H1 (cell line): ENCODE measurements at regions of chr2 and their contacts with region 1.

Region 1: GRCh38 chr2:88055371-88056128 is at the start of gene KRCC1:
- DNase-seq: peak; percentile 93
- H3K4me3 ChIP-seq: peak within 1 kb of the TSS; percentile 88 to 99 (median 93)
- H3K27ac ChIP-seq: peak within 1 kb of the TSS; percentile 84
- H3K4me1 ChIP-seq: peaks cover 0 to 9% (median 4%) of the 10 kb centered on the region in 4 experiments; a peak in 5 of 7 replicates
- H3K27me3 ChIP-seq: no peaks in the 10 kb centered on the region
- CTCF ChIP-seq: no peak
- EP300 ChIP-seq: no peak
- POLR2A ChIP-seq: peak; percentile 79 to 86
- RAD21 ChIP-seq: no peak
- total RNA-seq, gene KRCC1: 7.7 and 8.5 TPM in 2 replicates

Region 2: GRCh38 chr2:88016086-88016959 is 39.2 kb before region 1 on chr2 and contains the start of gene RNU2-63P:
- CTCF ChIA-PET with region 1: interaction called, 8 read pairs
- POLR2A ChIA-PET with region 1: interaction called, 26 read pairs
- DNase-seq: peak; percentile 65 to 91
- H3K4me3 ChIP-seq: peak within 1 kb of the TSS; percentile 65 to 81 (median 72)
- H3K27ac ChIP-seq: peak within 1 kb of the TSS; percentile 97
- H3K4me1 ChIP-seq: peaks cover 9 to 18% (median 13%) of the 10 kb centered on the region in 4 experiments
- H3K27me3 ChIP-seq: no peaks in the 10 kb centered on the region
- CTCF ChIP-seq: no peak
- EP300 ChIP-seq: no peak; a peak in 1 of 3 replicates
- POLR2A ChIP-seq: peak; percentile 97 to 100
- RAD21 ChIP-seq: no peak
- total RNA-seq, gene RNU2-63P: 6.6 and 8.3 TPM in 2 replicates

Region 3: DNA sequence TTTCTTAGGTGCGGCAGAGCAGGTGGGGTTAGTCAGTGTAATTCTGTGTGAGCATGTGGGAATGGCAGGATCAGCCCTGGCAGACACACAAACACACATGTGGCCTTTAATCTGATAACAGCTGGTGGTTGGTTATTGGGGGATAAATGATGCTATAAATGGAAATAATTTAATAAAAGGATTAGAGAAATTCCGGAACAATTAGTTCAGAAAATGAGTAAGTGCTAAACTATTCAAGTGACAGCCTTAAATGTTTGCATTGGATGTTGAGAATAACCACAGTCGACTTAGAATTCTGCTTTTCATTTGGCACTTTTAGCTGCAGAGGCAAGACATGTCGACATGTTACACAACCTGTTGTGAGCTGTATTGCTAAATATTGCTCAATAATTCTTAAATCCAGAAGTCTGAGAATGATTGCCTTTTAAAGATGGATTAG is 19.3 kb after region 1 on chr2:
- CTCF ChIA-PET with region 1: interaction called, 50 read pairs
- POLR2A ChIA-PET with region 1: interaction called, 4 read pairs
- DNase-seq: no peak
- H3K4me3 ChIP-seq: no peak overlapping the region
- H3K27ac ChIP-seq: no peak overlapping the region
- H3K4me1 ChIP-seq: 0 out of 7 replicates have a peak, but pooled peaks cover 0 to 2% (median 0%) of the 10 kb centered on the region in 4 experiments
- H3K27me3 ChIP-seq: no peaks in the 10 kb centered on the region
- CTCF ChIP-seq: no peak
- EP300 ChIP-seq: no peak
- POLR2A ChIP-seq: no peak
- RAD21 ChIP-seq: no peak

Region 4: DNA sequence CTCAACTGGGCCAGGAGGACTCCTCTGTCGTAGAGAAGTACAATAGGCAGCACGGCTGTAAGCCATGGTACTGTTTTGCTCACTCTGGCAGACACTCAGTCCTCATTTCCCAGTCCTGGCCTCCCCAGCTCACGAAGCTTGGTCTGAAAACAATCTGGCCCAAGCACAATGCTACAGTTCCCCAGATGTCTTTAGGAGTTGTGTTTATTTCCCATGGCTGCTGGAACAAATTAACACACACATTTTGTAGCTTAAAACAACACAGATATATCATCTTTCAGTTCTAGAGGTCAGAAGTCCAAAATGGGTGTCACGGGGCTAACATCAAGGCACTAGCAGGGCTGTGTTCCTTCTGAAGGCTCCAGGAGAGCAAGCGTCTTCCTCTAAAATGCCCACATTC is 59.3 kb after region 1 on chr2:
- CTCF ChIA-PET with region 1: interaction called, 20 read pairs
- POLR2A ChIA-PET with region 1: no interaction called
- DNase-seq: no peak
- H3K4me3 ChIP-seq: no peak overlapping the region
- H3K27ac ChIP-seq: no peak overlapping the region
- H3K4me1 ChIP-seq: no peaks in the 10 kb centered on the region; a peak in 1 of 7 replicates
- H3K27me3 ChIP-seq: no peaks in the 10 kb centered on the region
- CTCF ChIP-seq: no peak
- EP300 ChIP-seq: no peak
- POLR2A ChIP-seq: no peak
- RAD21 ChIP-seq: no peak

Region 5: DNA sequence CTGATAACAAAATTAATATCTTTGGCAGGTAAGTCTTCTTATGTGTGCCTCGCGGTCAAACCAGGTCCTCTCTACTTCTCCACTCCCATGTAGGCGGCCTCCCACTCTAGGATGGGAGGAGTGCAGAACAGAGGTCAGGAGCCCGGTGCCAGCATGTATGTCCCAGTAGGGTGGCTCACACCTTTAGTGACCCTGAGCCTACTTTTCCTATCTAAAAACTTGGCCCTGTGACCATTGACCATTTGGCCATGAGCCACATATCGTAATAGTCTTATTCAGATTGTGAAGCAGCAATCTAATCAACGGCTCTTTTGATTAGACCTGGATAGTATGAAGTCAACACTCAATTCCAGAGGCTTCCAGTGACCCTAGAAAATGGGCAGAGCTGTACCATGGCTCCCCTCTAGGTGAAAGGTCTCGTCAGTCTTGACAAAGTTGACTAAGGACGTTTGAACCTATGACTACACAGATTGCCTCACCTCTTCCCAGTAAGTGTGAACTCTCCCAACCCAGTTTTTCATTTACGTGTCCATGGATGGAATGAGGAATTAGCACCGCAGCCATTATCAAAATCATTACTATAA is 89.5 kb after region 1 on chr2:
- CTCF ChIA-PET with region 1: interaction called, 17 read pairs
- POLR2A ChIA-PET with region 1: no interaction called
- DNase-seq: no peak
- H3K4me3 ChIP-seq: no peak overlapping the region
- H3K27ac ChIP-seq: no peak overlapping the region
- H3K4me1 ChIP-seq: no peaks in the 10 kb centered on the region
- H3K27me3 ChIP-seq: no peaks in the 10 kb centered on the region
- CTCF ChIP-seq: no peak
- EP300 ChIP-seq: no peak
- POLR2A ChIP-seq: no peak
- RAD21 ChIP-seq: no peak

Region 6: GRCh38 chr2:88180606-88181240 is 125.2 kb after region 1 on chr2:
- CTCF ChIA-PET with region 1: interaction called, 46 read pairs
- POLR2A ChIA-PET with region 1: interaction called, 6 read pairs
- DNase-seq: peak in 1 of 2 experiments; percentile 29
- H3K4me3 ChIP-seq: no peak overlapping the region
- H3K27ac ChIP-seq: no peak overlapping the region
- H3K4me1 ChIP-seq: peaks cover 0 to 4% (median 0%) of the 10 kb centered on the region in 4 experiments; a peak in 1 of 7 replicates
- H3K27me3 ChIP-seq: 0 out of 7 replicates have a peak, but pooled peaks cover 0 to 4% (median 0%) of the 10 kb centered on the region in 4 experiments
- CTCF ChIP-seq: no peak
- EP300 ChIP-seq: no peak
- POLR2A ChIP-seq: no peak
- RAD21 ChIP-seq: no peak

Region 7: DNA sequence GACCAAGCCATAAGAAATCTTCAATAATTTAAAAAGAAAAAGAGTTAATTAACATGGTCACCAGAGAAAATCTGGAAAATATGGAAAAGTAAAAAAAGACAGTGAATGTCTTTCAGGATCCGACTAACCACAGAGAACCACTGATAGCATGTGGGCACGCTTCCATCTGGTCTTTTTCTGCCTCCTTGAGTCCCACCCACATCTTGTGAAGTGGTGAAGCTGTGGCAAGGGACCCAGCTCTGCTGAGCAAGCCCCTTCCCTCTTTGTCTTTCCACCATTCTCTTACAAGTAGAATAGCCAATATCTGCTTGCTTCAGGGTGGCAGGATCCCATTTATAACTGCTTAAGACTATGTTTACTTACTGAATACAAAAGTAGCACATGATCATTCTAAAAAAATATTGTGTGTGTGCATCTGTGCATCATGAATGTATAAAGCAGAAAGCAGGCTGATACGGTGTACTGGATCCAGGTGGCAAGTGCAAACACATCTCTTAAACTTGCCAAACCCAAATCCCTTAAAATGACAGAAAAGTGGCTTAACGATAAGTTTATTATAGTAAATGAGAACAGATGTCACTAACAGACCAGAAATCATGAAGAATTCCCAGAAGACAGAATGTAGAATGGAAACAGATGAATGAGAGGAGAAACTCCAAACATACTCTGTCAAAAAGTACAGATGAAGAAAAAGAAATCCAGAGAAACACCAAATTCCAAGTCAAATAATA is 344.7 kb after region 1 on chr2:
- CTCF ChIA-PET with region 1: no interaction called
- POLR2A ChIA-PET with region 1: no interaction called
- DNase-seq: no peak
- H3K4me3 ChIP-seq: no peak overlapping the region
- H3K27ac ChIP-seq: no peak overlapping the region
- H3K4me1 ChIP-seq: no peaks in the 10 kb centered on the region
- H3K27me3 ChIP-seq: no peaks in the 10 kb centered on the region
- CTCF ChIP-seq: no peak
- EP300 ChIP-seq: no peak
- POLR2A ChIP-seq: no peak
- RAD21 ChIP-seq: no peak

Region 8: GRCh38 chr2:88614497-88615157 is 559.1 kb after region 1 on chr2:
- CTCF ChIA-PET with region 1: no interaction called
- POLR2A ChIA-PET with region 1: no interaction called
- DNase-seq: no peak
- H3K4me3 ChIP-seq: no peak overlapping the region
- H3K27ac ChIP-seq: 0 out of 2 replicates have a peak overlapping the region, but pooled peaks have one; percentile 17
- H3K4me1 ChIP-seq: no peaks in the 10 kb centered on the region
- H3K27me3 ChIP-seq: no peaks in the 10 kb centered on the region
- CTCF ChIP-seq: no peak
- EP300 ChIP-seq: no peak
- POLR2A ChIP-seq: no peak
- RAD21 ChIP-seq: no peak